PC-3 (cell line): ENCODE measurements at regions of chr10 and their contacts with region 1.

Region 1: GRCh38 chr10:109978481-109978880 is 29.3 kb upstream of the ADD3 start:
- DNase-seq: peak; percentile 48
- ATAC-seq: no peak
- H3K4me3 ChIP-seq: no peak overlapping the region
- H3K27ac ChIP-seq: no peak overlapping the region
- H3K4me1 ChIP-seq: no peaks in the 10 kb centered on the region
- H3K27me3 ChIP-seq: no peaks in the 10 kb centered on the region
- CTCF ChIP-seq: peak; percentile 83

Region 2: GRCh38 chr10:110016039-110016438 is 37.6 kb after region 1 on chr10:
- CTCF ChIA-PET with region 1: interaction called, 3 read pairs
- POLR2A ChIA-PET with region 1: no interaction called
- intact Hi-C with region 1: loop called (anchors 1 kb)
- DNase-seq: peak; percentile 19
- ATAC-seq: peak; percentile 57; the same call in 1 of the 2 replicates
- H3K4me3 ChIP-seq: no peak overlapping the region
- H3K27ac ChIP-seq: no peak overlapping the region
- H3K4me1 ChIP-seq: peaks cover 22% of the 10 kb centered on the region
- H3K27me3 ChIP-seq: no peaks in the 10 kb centered on the region
- CTCF ChIP-seq: peak; percentile 48